ENCODE measurements at regions of chr17 and their contacts with region 1.

Region 1: GRCh38 chr17:35312790-35313711 is 60.4 kb downstream of the SLFN11 start:
- DNase-seq: peak; percentile 72 to 98 (median 92)
- ATAC-seq: peak; percentile 87 to 91 (median 89)
- H3K4me3 ChIP-seq: peak overlapping the region; percentile 52 to 86
- H3K4me3 Mint-ChIP-seq: peak overlapping the region; percentile 91 to 93 (median 91)
- H3K27ac ChIP-seq: peak overlapping the region; percentile 93
- H3K27ac Mint-ChIP-seq: peak overlapping the region; percentile 97 to 98
- H3K4me1 ChIP-seq: peaks cover 4 to 32% of the 10 kb centered on the region in 2 experiments
- H3K4me1 Mint-ChIP-seq: peaks cover 58 to 72% (median 60%) of the 10 kb centered on the region in 3 donors
- H3K27me3 ChIP-seq: no peaks in the 10 kb centered on the region
- H3K27me3 Mint-ChIP-seq: no peaks in the 10 kb centered on the region

Region 2: GRCh38 chr17:35486920-35487732 is 174.1 kb after region 1 on chr17:
- CTCF ChIA-PET with region 1: interaction called in 1 of 2 experiments, 27 read pairs
- POLR2A ChIA-PET with region 1: interaction called, 3 to 4 read pairs
- DNase-seq: peak; percentile 46 to 85 (median 65)
- ATAC-seq: peak; percentile 77 to 84 (median 83)
- H3K4me3 ChIP-seq: peak overlapping the region; percentile 75 to 82
- H3K4me3 Mint-ChIP-seq: peak overlapping the region; percentile 94 to 96 (median 95)
- H3K27ac ChIP-seq: peak overlapping the region; percentile 83
- H3K27ac Mint-ChIP-seq: peak overlapping the region; percentile 94 to 98
- H3K4me1 ChIP-seq: peaks cover 9 to 31% of the 10 kb centered on the region in 2 experiments
- H3K4me1 Mint-ChIP-seq: peaks cover 53 to 81% (median 64%) of the 10 kb centered on the region in 3 donors
- H3K27me3 ChIP-seq: no peaks in the 10 kb centered on the region
- H3K27me3 Mint-ChIP-seq: no peaks in the 10 kb centered on the region

Region 3: DNA sequence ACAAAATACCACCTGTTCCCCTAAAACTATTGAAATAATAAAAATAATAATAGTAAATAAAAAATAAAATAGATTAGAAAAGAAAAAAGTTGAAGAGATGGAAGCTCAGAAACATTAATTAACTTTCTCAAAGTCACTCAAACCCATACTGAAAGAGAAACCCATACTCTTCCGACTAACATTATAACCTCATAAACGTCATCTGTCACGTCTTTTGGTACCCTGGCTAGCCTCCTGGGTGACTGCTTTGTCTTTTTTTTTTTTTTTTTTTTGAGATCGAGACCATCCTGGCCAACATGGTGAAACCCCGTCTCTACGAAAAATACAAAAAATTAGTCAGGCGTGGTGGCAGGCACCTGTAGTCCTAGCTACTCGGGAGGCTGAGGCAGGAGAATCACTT is 216.8 kb after region 1 on chr17:
- CTCF ChIA-PET with region 1: interaction called, 12 to 136 read pairs
- POLR2A ChIA-PET with region 1: interaction called in 1 of 2 experiments, 3 read pairs
- DNase-seq: peak in 1 of 35 experiments; percentile 59
- ATAC-seq: peak in 1 of 4 experiments; percentile 46
- H3K4me3 ChIP-seq: no peak overlapping the region
- H3K4me3 Mint-ChIP-seq: peak overlapping the region; percentile 42 to 63 (median 57)
- H3K27ac ChIP-seq: peak overlapping the region; percentile 52
- H3K27ac Mint-ChIP-seq: peak overlapping the region; percentile 63 to 90
- H3K4me1 ChIP-seq: peaks cover 17 to 35% of the 10 kb centered on the region in 2 experiments
- H3K4me1 Mint-ChIP-seq: peaks cover 82 to 94% (median 83%) of the 10 kb centered on the region in 3 donors
- H3K27me3 ChIP-seq: no peaks in the 10 kb centered on the region
- H3K27me3 Mint-ChIP-seq: no peaks in the 10 kb centered on the region

Measured in T-cell (primary cell).